Gastrocnemius medialis (tissue), 4 donors: ENCODE measurements at regions of chr11 and their contacts with region 1.

Region 1: DNA sequence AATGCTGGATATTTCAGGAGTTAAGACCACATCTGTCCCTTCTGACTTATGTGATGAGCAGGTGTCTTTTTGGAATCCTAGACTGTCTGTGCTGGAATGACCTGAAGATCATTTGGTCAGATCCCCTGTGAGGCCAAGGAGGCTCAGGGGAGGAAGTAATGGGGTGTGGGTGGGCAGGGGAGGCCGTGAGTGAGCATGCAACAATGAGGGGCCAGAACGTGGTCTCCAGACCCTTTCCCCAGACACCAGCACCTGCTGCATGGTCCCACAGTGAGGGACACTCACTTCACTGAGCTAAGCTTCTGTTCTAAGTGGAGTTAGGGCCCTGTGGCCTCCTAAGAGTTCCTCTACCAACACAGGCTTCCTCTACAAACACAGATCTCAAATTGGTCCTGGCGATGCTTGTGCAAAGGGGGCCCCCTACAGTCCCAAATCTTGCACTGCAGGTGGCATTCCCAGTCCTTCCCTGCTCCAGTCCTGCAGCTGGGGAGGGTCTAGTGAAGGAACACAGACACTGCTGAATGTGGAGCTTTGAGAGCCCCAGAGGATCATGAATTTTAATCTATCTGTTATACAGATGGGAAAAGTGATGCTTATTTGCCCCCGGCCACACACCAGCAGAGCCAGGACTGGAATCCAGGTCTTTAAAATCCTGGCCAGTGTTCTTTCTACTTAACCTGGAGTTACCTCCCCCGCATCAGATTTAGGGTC is 7.4 kb downstream of the USP2 start:
- DNase-seq: peak in 1 of 2 donors; percentile 82
- ATAC-seq: peak; percentile 10 to 15
- H3K4me3 ChIP-seq: peak overlapping the region in 1 of 4 donors; percentile 38
- H3K27ac ChIP-seq: peak overlapping the region; percentile 96 to 99 (median 98)
- H3K4me1 ChIP-seq: peaks cover 82 to 89% of the 10 kb centered on the region in 2 donors
- H3K27me3 ChIP-seq: no peaks in the 10 kb centered on the region
- CTCF ChIP-seq: peak; percentile 93 to 96 (median 93)
- POLR2A ChIP-seq: no peak

Region 2: GRCh38 chr11:118838905-118839553 is 535.0 kb before region 1 on chr11:
- in situ Hi-C with region 1: no loop called
- intact Hi-C with region 1: no loop called
- DNase-seq: no peak
- ATAC-seq: no peak
- H3K4me3 ChIP-seq: no peak overlapping the region
- H3K27ac ChIP-seq: no peak overlapping the region
- H3K4me1 ChIP-seq: peaks cover 0 to 10% of the 10 kb centered on the region in 2 donors
- H3K27me3 ChIP-seq: no peaks in the 10 kb centered on the region
- CTCF ChIP-seq: no peak
- POLR2A ChIP-seq: no peak

Region 3: DNA sequence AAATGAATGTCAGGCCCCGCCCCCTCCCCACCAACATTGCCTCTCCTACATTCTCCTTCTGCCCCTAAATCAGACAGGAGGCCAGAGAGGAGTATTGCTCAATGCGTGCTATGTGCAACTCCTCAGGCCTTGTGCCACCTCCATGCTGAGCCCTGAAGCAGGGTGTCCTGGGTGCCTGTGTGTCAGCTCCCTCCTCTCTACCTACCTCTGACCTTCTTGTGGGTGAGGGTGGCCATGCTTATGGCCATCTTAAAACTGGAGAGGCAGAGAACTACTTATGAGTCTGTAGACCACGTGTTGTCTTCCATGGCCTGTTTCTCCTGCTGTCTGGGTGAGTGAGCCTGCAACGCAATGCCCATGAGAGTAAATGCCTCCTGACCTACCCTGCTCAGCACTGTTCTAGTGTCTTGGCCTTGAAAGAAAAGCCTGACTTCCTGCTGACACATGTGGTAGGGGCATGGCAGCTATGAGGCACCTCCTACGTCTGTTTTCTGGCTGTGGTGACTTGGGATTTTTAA is 67.6 kb before region 1 on chr11:
- in situ Hi-C with region 1: no loop called
- intact Hi-C with region 1: no loop called
- DNase-seq: peak in 1 of 2 donors; percentile 74
- ATAC-seq: peak; percentile 48 to 84
- H3K4me3 ChIP-seq: no peak overlapping the region
- H3K27ac ChIP-seq: peak overlapping the region; percentile 63 to 74 (median 71)
- H3K4me1 ChIP-seq: peaks cover 44 to 47% of the 10 kb centered on the region in 2 donors
- H3K27me3 ChIP-seq: no peaks in the 10 kb centered on the region
- CTCF ChIP-seq: no peak
- POLR2A ChIP-seq: no peak

Region 4: GRCh38 chr11:119356349-119357031 is 17.6 kb before region 1 on chr11:
- in situ Hi-C with region 1: no loop called
- intact Hi-C with region 1: loop called (anchors 1 kb)
- DNase-seq: peak in 1 of 2 donors; percentile 80
- ATAC-seq: peak; percentile 38 to 48
- H3K4me3 ChIP-seq: peak overlapping the region; percentile 42 to 56 (median 48)
- H3K27ac ChIP-seq: peak overlapping the region; percentile 96 to 99 (median 98)
- H3K4me1 ChIP-seq: peaks cover 33 to 34% of the 10 kb centered on the region in 2 donors
- H3K27me3 ChIP-seq: no peaks in the 10 kb centered on the region
- CTCF ChIP-seq: peak; percentile 87 to 99 (median 92)
- POLR2A ChIP-seq: peak in 1 of 2 donors; percentile 27